ENCODE measurements at regions of chr21 and their contacts with region 1.

Region 1: DNA sequence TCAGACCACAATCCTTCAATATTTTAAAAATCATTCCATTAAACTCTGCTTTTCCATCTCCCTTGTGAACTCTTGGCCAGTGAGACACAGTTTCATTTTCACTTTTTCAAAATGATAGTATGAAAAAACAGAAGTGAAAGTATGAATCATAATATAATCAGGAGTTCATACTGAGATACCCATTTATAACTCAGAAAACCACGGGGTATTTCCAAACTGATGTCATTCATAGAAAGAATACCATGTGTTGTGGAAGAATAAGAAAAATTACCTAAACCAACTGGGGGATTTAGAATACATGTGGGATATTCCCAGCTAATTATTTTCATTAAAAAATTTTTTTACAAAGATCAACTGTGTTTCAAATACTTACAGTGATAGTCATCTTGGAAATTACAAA is 149.9 kb downstream of the MRPL39 start:
- DNase-seq: peak; percentile 88
- ATAC-seq: peak; percentile 82
- H3K4me3 ChIP-seq: peak overlapping the region in 1 of 5 experiments; percentile 44
- H3K4me3 Mint-ChIP-seq: peak overlapping the region; percentile 62
- H3K27ac ChIP-seq: peak overlapping the region; percentile 90 to 94
- H3K27ac Mint-ChIP-seq: peak overlapping the region; percentile 75
- H3K4me1 ChIP-seq: peaks cover 23 to 26% of the 10 kb centered on the region in 2 donors
- H3K4me1 Mint-ChIP-seq: peaks cover 45% of the 10 kb centered on the region
- H3K27me3 ChIP-seq: no peaks in the 10 kb centered on the region
- H3K27me3 Mint-ChIP-seq: no peaks in the 10 kb centered on the region
- CTCF ChIP-seq: no peak

Region 2: GRCh38 chr21:25490742-25491141 is 33.3 kb after region 1 on chr21:
- CTCF ChIA-PET with region 1: no interaction called
- POLR2A ChIA-PET with region 1: no interaction called
- intact Hi-C with region 1: loop called (anchors 2 kb)
- DNase-seq: no peak
- ATAC-seq: no peak
- H3K4me3 ChIP-seq: no peak overlapping the region
- H3K4me3 Mint-ChIP-seq: no peak overlapping the region
- H3K27ac ChIP-seq: no peak overlapping the region
- H3K27ac Mint-ChIP-seq: no peak overlapping the region
- H3K4me1 ChIP-seq: peaks cover 9% of the 10 kb centered on the region in 2 donors
- H3K4me1 Mint-ChIP-seq: peaks cover 30% of the 10 kb centered on the region
- H3K27me3 ChIP-seq: no peaks in the 10 kb centered on the region
- H3K27me3 Mint-ChIP-seq: no peaks in the 10 kb centered on the region
- CTCF ChIP-seq: no peak

Region 3: DNA sequence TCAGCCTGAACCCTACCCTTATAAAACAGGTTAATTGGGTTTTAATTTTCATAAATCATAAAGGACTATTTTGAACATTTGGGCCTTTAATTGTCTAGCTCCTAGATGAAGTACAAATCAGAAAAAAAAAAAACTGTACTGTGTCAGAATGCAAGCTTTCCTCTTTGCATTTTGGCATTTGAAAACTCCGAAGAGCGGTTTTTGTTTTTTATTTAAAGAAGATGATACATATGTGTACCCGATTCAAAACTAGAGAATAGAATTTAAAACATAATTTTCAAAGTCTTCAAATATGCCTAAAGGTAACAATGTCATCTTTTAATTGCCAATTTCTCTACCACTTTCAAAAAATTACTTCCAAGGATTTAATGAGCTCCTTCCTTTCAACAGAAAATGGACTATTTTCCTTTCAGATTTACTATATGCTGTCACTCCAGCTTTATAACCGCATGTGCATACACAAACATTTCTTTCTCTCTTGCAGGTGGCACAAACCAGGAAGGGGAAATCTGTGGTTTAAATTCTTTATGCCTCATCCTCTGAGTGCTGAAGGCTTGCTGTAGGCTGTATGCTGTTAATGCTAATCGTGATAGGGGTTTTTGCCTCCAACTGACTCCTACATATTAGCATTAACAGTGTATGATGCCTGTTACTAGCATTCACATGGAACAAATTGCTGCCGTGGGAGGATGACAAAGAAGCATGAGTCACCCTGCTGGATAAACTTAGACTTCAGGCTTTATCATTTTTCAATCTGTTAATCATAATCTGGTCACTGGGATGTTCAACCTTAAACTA is 116.2 kb after region 1 on chr21:
- CTCF ChIA-PET with region 1: interaction called, 3 read pairs
- POLR2A ChIA-PET with region 1: no interaction called
- intact Hi-C with region 1: loop called (anchors 1 kb)
- DNase-seq: peak; percentile 76
- ATAC-seq: peak; percentile 69
- H3K4me3 ChIP-seq: peak overlapping the region; percentile 1 to 44 (median 25)
- H3K4me3 Mint-ChIP-seq: peak overlapping the region; percentile 66
- H3K27ac ChIP-seq: peak overlapping the region; percentile 73 to 87
- H3K27ac Mint-ChIP-seq: peak overlapping the region; percentile 85
- H3K4me1 ChIP-seq: peaks cover 27 to 30% of the 10 kb centered on the region in 2 donors
- H3K4me1 Mint-ChIP-seq: peaks cover 74% of the 10 kb centered on the region
- H3K27me3 ChIP-seq: no peaks in the 10 kb centered on the region
- H3K27me3 Mint-ChIP-seq: no peaks in the 10 kb centered on the region
- CTCF ChIP-seq: no peak

Region 4: DNA sequence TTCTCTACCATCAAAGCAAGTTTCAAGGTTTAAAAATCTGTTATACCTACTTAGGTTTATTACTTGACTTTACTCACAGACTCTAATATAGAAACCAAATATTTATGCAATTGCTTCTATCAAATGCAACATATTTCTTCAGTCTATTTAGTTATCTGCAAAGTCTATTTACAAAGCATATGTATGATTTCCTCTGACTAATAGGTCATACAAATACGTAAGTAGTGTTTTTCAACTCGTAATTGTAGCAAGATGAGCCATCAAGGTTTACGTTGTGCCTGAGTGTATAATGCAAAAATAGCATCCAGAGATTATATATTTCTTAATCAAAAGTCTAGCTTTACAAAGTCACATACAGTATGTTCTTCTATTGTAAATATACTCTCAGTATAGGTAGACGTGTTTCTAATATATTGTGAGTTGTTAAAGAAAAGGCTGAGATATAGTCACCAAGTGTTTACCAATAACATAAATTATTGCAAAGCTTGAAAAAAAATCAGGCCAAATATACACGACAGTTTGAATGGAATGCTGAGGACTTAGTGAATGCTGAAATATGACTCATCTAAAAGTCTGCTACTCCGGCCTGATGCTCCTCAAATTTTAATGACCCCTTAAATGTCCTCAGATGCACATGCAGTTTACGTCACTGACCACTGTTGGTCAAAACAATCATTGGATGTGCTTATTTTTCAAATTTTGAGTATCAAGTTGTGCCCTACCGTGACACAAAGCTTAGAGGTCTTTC is 1461.1 kb after region 1 on chr21:
- CTCF ChIA-PET with region 1: no interaction called
- POLR2A ChIA-PET with region 1: no interaction called
- intact Hi-C with region 1: no loop called
- DNase-seq: no peak
- ATAC-seq: no peak
- H3K4me3 ChIP-seq: no peak overlapping the region
- H3K4me3 Mint-ChIP-seq: no peak overlapping the region
- H3K27ac ChIP-seq: no peak overlapping the region
- H3K27ac Mint-ChIP-seq: no peak overlapping the region
- H3K4me1 ChIP-seq: no peaks in the 10 kb centered on the region
- H3K4me1 Mint-ChIP-seq: no peaks in the 10 kb centered on the region
- H3K27me3 ChIP-seq: no peaks in the 10 kb centered on the region
- H3K27me3 Mint-ChIP-seq: no peaks in the 10 kb centered on the region
- CTCF ChIP-seq: no peak